ENCODE measurements at regions of chr19 and their contacts with region 1.

Region 1: DNA sequence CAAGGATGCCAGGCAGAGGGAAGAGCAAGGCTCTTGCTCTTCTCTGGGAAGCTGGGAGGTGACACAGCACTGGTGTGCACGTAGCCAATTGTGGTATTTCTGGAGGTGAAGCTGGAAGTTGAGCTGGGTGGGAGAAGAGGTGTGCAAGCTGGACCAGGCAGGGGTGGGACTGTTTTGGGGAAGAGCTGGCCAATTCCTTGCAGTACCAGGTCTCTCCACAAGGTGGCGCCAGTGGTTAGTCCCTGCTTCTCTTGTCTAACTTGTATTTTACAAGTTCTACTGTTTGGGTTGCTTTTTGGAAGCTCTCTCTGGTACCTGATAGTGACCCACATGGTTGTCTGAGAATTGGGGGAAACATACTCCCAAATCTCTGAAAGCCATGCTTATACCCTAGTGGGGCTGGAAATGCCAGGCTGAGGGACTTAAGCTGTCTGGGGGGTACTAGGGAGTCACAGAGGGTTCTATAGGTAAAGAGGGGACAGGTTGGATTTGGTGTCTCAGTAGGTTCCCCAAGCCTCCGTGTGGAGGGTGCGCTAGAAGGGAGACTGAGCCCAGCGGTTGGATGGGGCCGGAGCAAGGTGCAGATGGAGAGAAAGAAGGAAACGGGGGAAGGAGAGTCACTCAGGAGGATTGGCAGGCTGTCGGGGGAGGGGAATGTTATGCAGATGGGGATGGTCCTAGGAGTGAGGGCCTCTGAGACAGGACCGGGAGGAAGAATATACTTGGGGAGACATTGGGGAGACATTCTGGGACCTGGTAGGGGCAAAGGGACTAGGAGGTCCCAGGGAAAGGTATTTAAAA is 3.0 kb downstream of the HPN start:
- DNase-seq: peak in 4 of 5 donors; percentile 45 to 62 (median 50)
- H3K4me3 ChIP-seq: no peak overlapping the region
- H3K4me3 Mint-ChIP-seq: peak overlapping the region in 1 of 8 donors; percentile 81
- H3K27ac ChIP-seq: no peak overlapping the region
- H3K27ac Mint-ChIP-seq: peak overlapping the region in 4 of 7 donors; percentile 51 to 71 (median 64)
- H3K4me1 ChIP-seq: peaks cover 32% of the 10 kb centered on the region
- H3K4me1 Mint-ChIP-seq: peaks cover 20 to 34% (median 26%) of the 10 kb centered on the region in 4 donors
- H3K27me3 ChIP-seq: no peaks in the 10 kb centered on the region
- H3K27me3 Mint-ChIP-seq: peaks cover 6 to 8% of the 10 kb centered on the region in 2 donors

Region 2: GRCh38 chr19:34838753-34839431 is 205.6 kb before region 1 on chr19:
- CTCF ChIA-PET with region 1: interaction called, 10 read pairs
- POLR2A ChIA-PET with region 1: no interaction called
- intact Hi-C with region 1: no loop called
- DNase-seq: peak in 3 of 5 donors; percentile 15 to 29 (median 17)
- H3K4me3 ChIP-seq: no peak overlapping the region
- H3K4me3 Mint-ChIP-seq: peak overlapping the region in 5 of 8 donors; percentile 53 to 73 (median 66)
- H3K27ac ChIP-seq: no peak overlapping the region
- H3K27ac Mint-ChIP-seq: peak overlapping the region in 3 of 7 donors; percentile 42 to 69 (median 52)
- H3K4me1 ChIP-seq: peaks cover 8% of the 10 kb centered on the region
- H3K4me1 Mint-ChIP-seq: peaks cover 10 to 30% (median 18%) of the 10 kb centered on the region in 4 donors
- H3K27me3 ChIP-seq: no peaks in the 10 kb centered on the region
- H3K27me3 Mint-ChIP-seq: peaks cover 0 to 2% of the 10 kb centered on the region in 2 donors

Region 3: GRCh38 chr19:34974646-34975045 is 69.9 kb before region 1 on chr19:
- CTCF ChIA-PET with region 1: interaction called, 54 read pairs
- POLR2A ChIA-PET with region 1: no interaction called
- intact Hi-C with region 1: loop called (anchors 1 kb)
- DNase-seq: no peak
- H3K4me3 ChIP-seq: no peak overlapping the region
- H3K4me3 Mint-ChIP-seq: peak overlapping the region in 1 of 8 donors; percentile 26
- H3K27ac ChIP-seq: no peak overlapping the region
- H3K27ac Mint-ChIP-seq: peak overlapping the region in 1 of 7 donors; percentile 50
- H3K4me1 ChIP-seq: peaks cover 11% of the 10 kb centered on the region
- H3K4me1 Mint-ChIP-seq: peaks cover 9 to 19% (median 13%) of the 10 kb centered on the region in 4 donors
- H3K27me3 ChIP-seq: no peaks in the 10 kb centered on the region
- H3K27me3 Mint-ChIP-seq: peaks cover 0 to 4% of the 10 kb centered on the region in 2 donors

Region 4: DNA sequence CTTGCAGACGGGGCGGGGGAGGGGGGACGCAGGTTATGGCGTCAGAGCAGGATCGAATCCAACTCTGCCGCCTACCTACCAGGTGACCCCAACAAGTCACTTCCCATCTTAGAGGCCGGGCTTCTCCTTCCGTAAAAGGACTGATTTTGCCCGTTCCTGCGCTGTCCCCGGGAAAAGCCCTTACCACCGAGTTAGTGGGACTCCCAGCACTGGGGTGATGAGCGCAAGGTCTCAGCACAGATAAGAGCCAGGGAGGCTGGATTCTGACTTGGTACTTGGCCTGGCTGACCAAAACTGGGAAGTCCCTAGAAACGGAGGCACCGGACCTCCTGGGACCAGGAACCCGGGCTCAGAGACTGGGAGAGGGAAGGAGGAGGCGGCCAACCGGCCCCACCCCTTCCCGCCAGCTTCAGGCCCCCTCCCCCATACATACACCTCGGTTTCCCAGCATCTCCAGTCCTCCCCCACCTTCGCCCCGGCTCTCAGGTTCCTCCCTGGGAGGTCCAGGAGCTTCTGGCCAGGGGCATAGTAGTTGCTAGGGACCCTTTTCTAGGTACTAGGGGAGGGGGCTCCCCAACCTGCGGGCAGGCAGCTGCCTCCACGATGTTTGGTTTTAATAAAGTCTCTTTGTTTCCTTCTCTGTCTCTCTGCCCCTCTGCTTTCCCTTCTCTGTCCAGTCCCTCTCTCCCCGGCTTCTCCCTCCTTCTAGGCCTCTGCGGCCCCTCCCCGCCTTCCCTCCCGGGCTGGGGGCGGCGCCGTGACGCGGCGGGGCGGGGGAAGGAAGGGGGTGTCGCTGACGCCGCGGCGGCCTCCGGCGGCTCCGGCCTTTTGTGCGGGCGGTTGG is 44.8 kb before region 1 on chr19 and contains the start of gene GRAMD1A:
- CTCF ChIA-PET with region 1: interaction called, 3 read pairs
- POLR2A ChIA-PET with region 1: interaction called, 8 read pairs
- intact Hi-C with region 1: loop called (anchors 5 kb)
- DNase-seq: peak; percentile 52 to 69 (median 59)
- H3K4me3 ChIP-seq: peak within 1 kb of the TSS; percentile 50 to 83
- H3K4me3 Mint-ChIP-seq: peak within 1 kb of the TSS; percentile 94 to 99 (median 99)
- H3K27ac ChIP-seq: peak within 1 kb of the TSS; percentile 88
- H3K27ac Mint-ChIP-seq: peak within 1 kb of the TSS; percentile 88 to 99 (median 98)
- H3K4me1 ChIP-seq: peaks cover 79% of the 10 kb centered on the region
- H3K4me1 Mint-ChIP-seq: peaks cover 48 to 86% (median 67%) of the 10 kb centered on the region in 4 donors
- H3K27me3 ChIP-seq: no peaks in the 10 kb centered on the region
- H3K27me3 Mint-ChIP-seq: no peaks in the 10 kb centered on the region
- total RNA-seq, gene GRAMD1A: 205 to 221 TPM

Region 5: GRCh38 chr19:35030257-35031071 is 14.1 kb before region 1 on chr19 and contains the start of gene SCN1B:
- CTCF ChIA-PET with region 1: interaction called, 14 read pairs
- POLR2A ChIA-PET with region 1: interaction called, 3 read pairs
- intact Hi-C with region 1: no loop called
- DNase-seq: peak; percentile 39 to 67 (median 42)
- H3K4me3 ChIP-seq: peak within 1 kb of the TSS in 1 of 2 donors; percentile 35
- H3K4me3 Mint-ChIP-seq: peak within 1 kb of the TSS; percentile 75 to 88 (median 84)
- H3K27ac ChIP-seq: no peak within 1 kb of the TSS
- H3K27ac Mint-ChIP-seq: peak within 1 kb of the TSS in 4 of 7 donors; percentile 36 to 71 (median 44)
- H3K4me1 ChIP-seq: peaks cover 13% of the 10 kb centered on the region
- H3K4me1 Mint-ChIP-seq: peaks cover 7 to 10% (median 8%) of the 10 kb centered on the region in 4 donors
- H3K27me3 ChIP-seq: no peaks in the 10 kb centered on the region
- H3K27me3 Mint-ChIP-seq: peaks cover 7% of the 10 kb centered on the region in 2 donors
- total RNA-seq, gene SCN1B: 1.4 to 1.5 TPM

Region 6: DNA sequence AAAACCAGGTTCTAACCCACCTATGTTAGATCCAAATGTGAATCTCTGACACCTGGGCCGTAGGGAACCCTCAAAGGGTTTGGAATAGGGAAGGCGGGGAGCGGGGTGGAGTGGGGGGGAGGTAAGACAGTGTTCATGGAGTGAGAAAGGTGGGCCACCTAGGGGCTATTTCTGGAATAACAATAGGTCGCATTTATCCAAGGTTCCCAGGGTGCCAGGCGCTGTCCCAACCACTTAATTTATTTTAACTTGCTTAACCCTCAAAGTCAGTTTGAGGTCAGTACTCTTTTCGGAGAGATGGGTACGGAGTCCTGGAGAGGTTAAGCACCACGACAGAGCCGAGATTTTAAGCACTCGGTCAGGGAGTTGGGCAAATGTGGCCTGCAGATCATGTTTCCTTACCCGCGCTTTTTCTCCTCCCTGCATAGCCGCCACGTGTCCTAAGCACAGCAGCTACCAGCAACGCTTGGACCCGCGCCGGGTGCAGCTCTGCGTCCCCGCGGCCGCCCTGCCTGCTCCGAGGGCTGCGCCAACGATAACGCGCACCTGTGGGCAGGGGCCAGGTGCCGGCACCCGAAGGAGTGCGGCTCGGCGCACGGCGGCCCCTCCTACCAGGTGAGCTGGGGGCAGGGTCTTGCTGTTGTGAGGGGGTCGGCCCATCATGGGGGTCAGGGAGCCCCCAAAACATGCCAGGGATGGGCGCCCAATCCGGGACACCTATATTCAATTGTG is 46.2 kb after region 1 on chr19:
- CTCF ChIA-PET with region 1: interaction called, 13 read pairs
- POLR2A ChIA-PET with region 1: no interaction called
- intact Hi-C with region 1: no loop called
- DNase-seq: peak in 4 of 5 donors; percentile 25 to 43 (median 30)
- H3K4me3 ChIP-seq: no peak overlapping the region
- H3K4me3 Mint-ChIP-seq: peak overlapping the region in 1 of 8 donors; percentile 13
- H3K27ac ChIP-seq: no peak overlapping the region
- H3K27ac Mint-ChIP-seq: no peak overlapping the region
- H3K4me1 ChIP-seq: peaks cover 15% of the 10 kb centered on the region
- H3K4me1 Mint-ChIP-seq: peaks cover 3 to 13% (median 5%) of the 10 kb centered on the region in 4 donors
- H3K27me3 ChIP-seq: no peaks in the 10 kb centered on the region
- H3K27me3 Mint-ChIP-seq: peaks cover 6 to 10% of the 10 kb centered on the region in 2 donors

Region 7: DNA sequence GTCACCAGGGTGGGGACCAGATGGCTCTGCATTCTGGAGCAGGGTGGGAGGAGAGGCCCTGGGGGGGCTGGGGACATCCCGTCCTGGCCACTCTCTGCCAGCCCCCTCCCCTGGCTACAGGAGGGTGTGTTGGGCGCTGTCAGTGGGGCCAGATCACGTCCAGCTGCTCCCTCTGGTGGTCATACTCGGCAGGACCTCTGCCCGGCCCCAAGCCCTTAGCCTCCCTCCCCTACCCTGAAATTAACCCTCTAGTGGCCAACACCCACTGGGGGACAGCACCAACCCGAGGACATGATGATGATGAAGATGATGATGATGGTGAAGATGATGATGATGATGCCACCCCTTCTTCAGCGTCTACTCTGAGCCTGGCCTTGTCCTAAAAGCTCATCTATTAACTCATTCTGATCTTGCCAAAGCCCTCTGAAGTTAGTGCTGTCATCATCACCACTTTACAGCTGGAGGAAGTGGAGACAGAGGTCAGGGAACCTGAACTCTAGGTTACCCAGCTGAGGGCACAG is 90.9 kb after region 1 on chr19:
- CTCF ChIA-PET with region 1: no interaction called
- POLR2A ChIA-PET with region 1: no interaction called
- intact Hi-C with region 1: no loop called
- DNase-seq: peak; percentile 48 to 66 (median 52)
- H3K4me3 ChIP-seq: no peak overlapping the region
- H3K4me3 Mint-ChIP-seq: no peak overlapping the region
- H3K27ac ChIP-seq: no peak overlapping the region
- H3K27ac Mint-ChIP-seq: peak overlapping the region in 2 of 7 donors; percentile 6 to 71
- H3K4me1 ChIP-seq: peaks cover 1% of the 10 kb centered on the region
- H3K4me1 Mint-ChIP-seq: peaks cover 2 to 21% (median 8%) of the 10 kb centered on the region in 4 donors
- H3K27me3 ChIP-seq: no peaks in the 10 kb centered on the region
- H3K27me3 Mint-ChIP-seq: no peaks in the 10 kb centered on the region

Measured in CD4-positive, alpha-beta memory T cell (primary cell).